H1 (cell line): ENCODE measurements at regions of chr6 and their contacts with region 1.

Region 1: GRCh38 chr6:142819603-142820337 is 125.2 kb downstream of the HIVEP2 start:
- DNase-seq: no peak
- H3K4me3 ChIP-seq: no peak overlapping the region
- H3K27ac ChIP-seq: no peak overlapping the region
- H3K4me1 ChIP-seq: peaks cover 0 to 8% (median 1%) of the 10 kb centered on the region in 4 experiments; a peak in 2 of 7 replicates
- H3K27me3 ChIP-seq: no peaks in the 10 kb centered on the region
- CTCF ChIP-seq: no peak
- EP300 ChIP-seq: no peak
- POLR2A ChIP-seq: no peak
- RAD21 ChIP-seq: no peak

Region 2: GRCh38 chr6:142802124-142802523 is 17.6 kb before region 1 on chr6:
- CTCF ChIA-PET with region 1: interaction called, 13 read pairs
- POLR2A ChIA-PET with region 1: interaction called, 4 read pairs
- DNase-seq: no peak
- H3K4me3 ChIP-seq: no peak overlapping the region
- H3K27ac ChIP-seq: no peak overlapping the region
- H3K4me1 ChIP-seq: peaks cover 0 to 4% (median 0%) of the 10 kb centered on the region in 4 experiments; a peak in 2 of 7 replicates
- H3K27me3 ChIP-seq: peaks cover 0 to 1% (median 0%) of the 10 kb centered on the region in 4 experiments; a peak in 1 of 7 replicates
- CTCF ChIP-seq: no peak
- EP300 ChIP-seq: no peak
- POLR2A ChIP-seq: no peak
- RAD21 ChIP-seq: no peak

Region 3: GRCh38 chr6:142835787-142836535 is 16.2 kb after region 1 on chr6:
- CTCF ChIA-PET with region 1: interaction called, 20 read pairs
- POLR2A ChIA-PET with region 1: no interaction called
- DNase-seq: no peak
- H3K4me3 ChIP-seq: no peak overlapping the region
- H3K27ac ChIP-seq: no peak overlapping the region
- H3K4me1 ChIP-seq: no peaks in the 10 kb centered on the region; a peak in 1 of 7 replicates
- H3K27me3 ChIP-seq: no peaks in the 10 kb centered on the region
- CTCF ChIP-seq: no peak
- EP300 ChIP-seq: no peak
- POLR2A ChIP-seq: no peak
- RAD21 ChIP-seq: no peak